Naive thymus-derived CD4-positive, alpha-beta T cell (primary cell): ENCODE measurements at regions of chrX and their contacts with region 1.

Region 1: DNA sequence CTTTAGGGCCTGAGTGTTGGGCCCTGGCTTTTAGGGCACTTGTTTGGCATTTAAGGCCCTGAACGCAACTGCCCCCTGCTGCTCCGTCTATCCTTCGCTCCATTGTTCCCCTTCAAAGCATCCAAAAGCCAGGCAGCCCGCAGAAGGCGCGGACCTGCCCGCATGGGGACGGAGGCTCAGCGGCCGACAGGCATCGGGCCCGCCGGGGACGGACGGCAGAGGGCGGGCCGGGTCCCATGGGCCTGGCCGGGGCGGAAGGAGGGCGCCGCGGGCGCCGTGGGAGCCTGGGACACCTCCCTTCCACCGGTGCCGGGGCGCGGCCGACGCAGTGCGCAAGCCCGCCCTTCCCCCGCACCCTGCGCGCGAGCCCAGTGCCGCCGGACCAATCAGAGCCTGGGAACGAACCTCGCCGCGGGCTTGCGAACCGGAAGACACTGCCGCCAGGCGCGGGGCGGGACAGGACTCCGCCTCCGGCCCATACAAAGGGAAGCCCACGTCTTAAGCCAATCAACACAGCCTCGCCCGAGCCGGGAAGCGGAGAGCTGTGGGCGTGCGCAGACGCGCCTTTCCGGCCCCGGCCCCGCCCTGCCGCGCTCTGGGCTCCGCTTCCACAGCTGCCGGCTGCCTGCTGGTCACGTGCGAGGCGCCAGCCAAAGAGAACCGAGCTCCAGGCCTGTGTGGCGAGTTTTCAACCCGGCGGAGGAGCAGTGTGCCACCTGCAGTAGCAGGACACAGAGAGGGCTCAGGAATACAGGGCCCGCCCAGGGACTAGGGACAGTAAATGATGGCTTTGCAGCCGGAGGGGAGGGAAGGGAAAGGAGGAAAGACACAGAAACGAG is 2.1 kb upstream of the ARHGAP4 start:
- DNase-seq: peak; percentile 80 to 98 (median 94)
- ATAC-seq: peak; percentile 86
- H3K4me3 ChIP-seq: peak overlapping the region; percentile 81
- H3K4me3 Mint-ChIP-seq: peak overlapping the region; percentile 90 to 98 (median 94)
- H3K27ac ChIP-seq: peak overlapping the region; percentile 98
- H3K27ac Mint-ChIP-seq: peak overlapping the region; percentile 80 to 100 (median 98)
- H3K4me1 ChIP-seq: peaks cover 14 to 18% of the 10 kb centered on the region in 2 donors
- H3K4me1 Mint-ChIP-seq: peaks cover 0 to 68% (median 21%) of the 10 kb centered on the region in 7 donors
- H3K27me3 ChIP-seq: no peaks in the 10 kb centered on the region
- H3K27me3 Mint-ChIP-seq: no peaks in the 10 kb centered on the region

Region 2: GRCh38 chrX:153724252-153725040 is 203.7 kb before region 1 on chrX and contains the starts of genes ABCD1 and BCAP31:
- CTCF ChIA-PET with region 1: no interaction called
- POLR2A ChIA-PET with region 1: no interaction called
- intact Hi-C with region 1: loop called (anchors 1 kb)
- DNase-seq: peak; percentile 82 to 93 (median 91)
- ATAC-seq: peak; percentile 88
- H3K4me3 ChIP-seq: peak within 1 kb of the TSS; percentile 55
- H3K4me3 Mint-ChIP-seq: peak within 1 kb of the TSS; percentile 75 to 95 (median 86)
- H3K27ac ChIP-seq: peak within 1 kb of the TSS; percentile 80
- H3K27ac Mint-ChIP-seq: peak within 1 kb of the TSS in 8 of 9 donors; percentile 55 to 87 (median 72)
- H3K4me1 ChIP-seq: peaks cover 10 to 29% of the 10 kb centered on the region in 2 donors
- H3K4me1 Mint-ChIP-seq: peaks cover 9 to 37% (median 28%) of the 10 kb centered on the region in 7 donors
- H3K27me3 ChIP-seq: no peaks in the 10 kb centered on the region
- H3K27me3 Mint-ChIP-seq: no peaks in the 10 kb centered on the region
- total RNA-seq, gene ABCD1: 6.6 to 17.6 (median 10.2) TPM
- total RNA-seq, gene BCAP31: 80.2 to 153 (median 117) TPM

Region 3: DNA sequence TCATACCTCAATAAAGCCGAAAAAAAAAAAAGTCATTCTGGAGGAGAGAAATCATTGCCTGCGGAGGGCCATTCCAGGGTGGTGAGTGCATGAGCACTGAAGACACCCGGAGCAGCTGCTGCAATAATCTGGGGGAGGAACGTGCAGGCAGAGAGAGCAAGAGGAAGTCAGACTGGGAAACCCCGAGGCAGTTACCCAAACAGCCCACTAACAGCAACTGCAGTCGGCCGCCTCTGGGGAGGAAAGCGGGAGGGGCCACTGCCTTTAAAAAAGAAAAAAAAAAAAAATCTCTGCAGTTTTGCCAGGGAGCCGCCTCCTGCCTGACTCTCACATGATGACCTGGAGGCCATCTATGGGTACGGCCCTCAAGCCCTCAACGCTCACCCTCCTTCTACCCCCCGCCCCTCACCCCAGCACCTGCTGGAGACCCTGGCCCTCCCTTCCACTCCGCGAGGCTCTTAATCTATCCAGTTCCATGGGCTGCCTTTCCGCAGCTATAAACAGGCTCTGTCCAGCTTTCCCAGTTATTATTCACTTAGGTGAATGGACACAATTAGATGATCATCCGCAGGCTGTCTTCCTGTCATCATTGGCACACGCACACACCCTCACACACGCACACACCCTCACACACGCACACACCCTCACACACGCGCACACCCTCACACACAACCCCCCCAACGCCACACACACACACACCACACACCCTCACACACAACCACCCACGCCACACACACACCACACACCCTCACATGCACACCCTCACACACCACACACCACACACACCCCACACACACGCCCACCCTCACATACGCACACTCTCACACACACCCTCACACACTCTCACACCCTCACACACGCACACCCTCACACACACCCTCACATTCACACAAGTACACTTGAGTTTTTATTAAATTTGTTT is 27.0 kb before region 1 on chrX:
- CTCF ChIA-PET with region 1: no interaction called
- POLR2A ChIA-PET with region 1: interaction called, 111 read pairs
- intact Hi-C with region 1: loop called in 1 of 2 experiments (anchors 2 kb)
- DNase-seq: peak in 8 of 9 donors; percentile 45 to 76 (median 64)
- ATAC-seq: peak; percentile 91
- H3K4me3 ChIP-seq: no peak overlapping the region
- H3K4me3 Mint-ChIP-seq: peak overlapping the region; percentile 51 to 84 (median 64)
- H3K27ac ChIP-seq: no peak overlapping the region
- H3K27ac Mint-ChIP-seq: peak overlapping the region in 8 of 9 donors; percentile 33 to 88 (median 71)
- H3K4me1 ChIP-seq: peaks cover 25 to 35% of the 10 kb centered on the region in 2 donors
- H3K4me1 Mint-ChIP-seq: peaks cover 16 to 54% (median 43%) of the 10 kb centered on the region in 7 donors
- H3K27me3 ChIP-seq: no peaks in the 10 kb centered on the region
- H3K27me3 Mint-ChIP-seq: peaks cover 0 to 5% (median 0%) of the 10 kb centered on the region in 5 donors

Region 4: GRCh38 chrX:153947009-153947769 is 19.0 kb after region 1 on chrX:
- CTCF ChIA-PET with region 1: interaction called, 168 read pairs
- POLR2A ChIA-PET with region 1: interaction called, 384 read pairs
- intact Hi-C with region 1: loop called (anchors 1 kb)
- DNase-seq: peak; percentile 58 to 83 (median 78)
- ATAC-seq: peak; percentile 93
- H3K4me3 ChIP-seq: no peak overlapping the region
- H3K4me3 Mint-ChIP-seq: peak overlapping the region; percentile 0 to 69 (median 32)
- H3K27ac ChIP-seq: no peak overlapping the region
- H3K27ac Mint-ChIP-seq: peak overlapping the region; percentile 26 to 94 (median 87)
- H3K4me1 ChIP-seq: peaks cover 3 to 9% of the 10 kb centered on the region in 2 donors
- H3K4me1 Mint-ChIP-seq: peaks cover 6 to 30% (median 20%) of the 10 kb centered on the region in 7 donors
- H3K27me3 ChIP-seq: no peaks in the 10 kb centered on the region
- H3K27me3 Mint-ChIP-seq: no peaks in the 10 kb centered on the region

Region 5: DNA sequence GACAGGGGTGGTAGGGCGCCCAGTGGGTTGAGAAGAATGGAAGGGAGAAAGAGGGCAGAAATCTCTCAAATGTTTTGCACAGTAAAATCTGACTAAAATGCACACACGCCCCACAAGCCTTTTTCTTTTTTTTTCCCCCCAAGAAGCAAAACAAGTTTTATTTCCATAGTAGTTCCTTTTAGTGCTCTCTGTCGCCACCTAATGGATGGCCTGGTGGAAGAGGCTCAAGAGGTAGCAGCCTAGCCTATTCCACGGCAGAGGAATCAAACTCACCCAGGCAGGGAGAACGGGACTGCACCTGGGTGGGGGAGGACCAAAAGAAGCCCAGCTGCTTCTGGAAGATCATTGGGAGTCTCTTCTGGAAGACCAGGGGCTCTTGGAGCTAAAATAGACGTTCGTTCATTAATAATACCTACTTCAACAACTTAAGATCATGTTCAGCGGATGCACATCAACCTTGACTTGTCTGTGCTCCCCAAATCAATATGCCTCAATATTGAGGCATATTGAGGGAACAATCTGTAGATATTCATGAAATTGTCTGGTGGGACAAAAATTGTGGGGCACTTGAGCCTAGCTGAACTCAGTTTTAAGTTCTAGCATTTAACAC is 123.2 kb after region 1 on chrX:
- CTCF ChIA-PET with region 1: no interaction called
- POLR2A ChIA-PET with region 1: no interaction called
- intact Hi-C with region 1: loop called in 1 of 2 experiments (anchors 2 kb)
- DNase-seq: peak; percentile 33 to 76 (median 66)
- ATAC-seq: peak; percentile 87
- H3K4me3 ChIP-seq: no peak overlapping the region
- H3K4me3 Mint-ChIP-seq: peak overlapping the region in 5 of 10 donors; percentile 21 to 45 (median 30)
- H3K27ac ChIP-seq: peak overlapping the region; percentile 11
- H3K27ac Mint-ChIP-seq: peak overlapping the region in 8 of 9 donors; percentile 20 to 84 (median 49)
- H3K4me1 ChIP-seq: no peaks in the 10 kb centered on the region
- H3K4me1 Mint-ChIP-seq: peaks cover 30 to 56% (median 47%) of the 10 kb centered on the region in 7 donors
- H3K27me3 ChIP-seq: no peaks in the 10 kb centered on the region
- H3K27me3 Mint-ChIP-seq: no peaks in the 10 kb centered on the region

Region 6: DNA sequence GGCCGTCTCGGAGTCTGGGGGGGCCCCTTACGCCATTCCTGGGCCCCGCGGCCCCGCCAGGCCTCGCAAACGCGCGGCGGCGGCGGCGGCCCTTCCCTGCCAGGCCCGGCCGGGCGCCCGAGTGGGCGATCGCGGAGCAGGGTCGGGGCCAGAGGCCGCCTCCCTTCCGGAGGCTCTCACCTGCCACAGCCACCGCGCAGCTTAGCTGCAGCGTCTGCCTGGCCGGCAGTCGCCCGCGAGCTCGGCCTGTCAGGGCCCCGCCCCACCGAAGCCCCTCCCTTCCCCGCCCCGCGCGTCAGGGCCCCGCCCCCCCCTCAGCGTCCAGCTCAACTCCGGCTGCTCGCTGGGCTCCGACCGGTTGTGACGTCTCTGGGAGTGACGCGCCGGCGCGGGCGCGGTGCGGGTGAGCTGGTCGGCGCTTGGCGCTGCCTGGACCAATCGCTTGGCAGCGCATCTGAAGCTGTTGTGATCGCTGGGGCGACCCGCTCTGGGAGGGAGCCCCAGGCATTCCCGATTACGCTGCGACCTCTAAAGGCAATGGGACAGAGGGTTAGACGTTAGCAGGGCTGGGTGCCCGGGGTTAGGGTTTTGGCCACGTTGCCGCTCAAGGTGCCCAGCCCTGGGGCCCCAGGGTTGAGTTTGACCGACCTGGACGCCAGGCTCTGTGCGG is 562.4 kb after region 1 on chrX and contains the start of gene SLC10A3:
- CTCF ChIA-PET with region 1: interaction called, 3 read pairs
- POLR2A ChIA-PET with region 1: no interaction called
- intact Hi-C with region 1: loop called in 1 of 2 experiments (anchors 10 kb)
- DNase-seq: peak; percentile 70 to 87 (median 77)
- ATAC-seq: peak; percentile 93
- H3K4me3 ChIP-seq: peak within 1 kb of the TSS; percentile 74
- H3K4me3 Mint-ChIP-seq: peak within 1 kb of the TSS; percentile 78 to 92 (median 88)
- H3K27ac ChIP-seq: peak within 1 kb of the TSS; percentile 90
- H3K27ac Mint-ChIP-seq: peak within 1 kb of the TSS; percentile 81 to 96 (median 91)
- H3K4me1 ChIP-seq: peaks cover 0 to under 1% of the 10 kb centered on the region in 2 donors
- H3K4me1 Mint-ChIP-seq: peaks cover 0 to 23% (median 17%) of the 10 kb centered on the region in 7 donors
- H3K27me3 ChIP-seq: no peaks in the 10 kb centered on the region
- H3K27me3 Mint-ChIP-seq: no peaks in the 10 kb centered on the region
- total RNA-seq, gene SLC10A3: 11.7 to 22.7 (median 19.0) TPM

Region 7: GRCh38 chrX:155148724-155149537 is 1220.8 kb after region 1 on chrX:
- CTCF ChIA-PET with region 1: no interaction called
- POLR2A ChIA-PET with region 1: no interaction called
- intact Hi-C with region 1: no loop called
- DNase-seq: peak in 8 of 9 donors; percentile 3 to 38 (median 25)
- ATAC-seq: peak; percentile 37
- H3K4me3 ChIP-seq: no peak overlapping the region
- H3K4me3 Mint-ChIP-seq: no peak overlapping the region
- H3K27ac ChIP-seq: no peak overlapping the region
- H3K27ac Mint-ChIP-seq: peak overlapping the region in 3 of 9 donors; percentile 38 to 73 (median 40)
- H3K4me1 ChIP-seq: no peaks in the 10 kb centered on the region
- H3K4me1 Mint-ChIP-seq: peaks cover 0 to 9% (median 4%) of the 10 kb centered on the region in 7 donors
- H3K27me3 ChIP-seq: no peaks in the 10 kb centered on the region
- H3K27me3 Mint-ChIP-seq: peaks cover 0 to 11% (median 0%) of the 10 kb centered on the region in 5 donors